ENCODE measurements at regions of chr10 and their contacts with region 1.

Region 1: GRCh38 chr10:118720685-118721538 is 33.9 kb downstream of the CACUL1 start:
- DNase-seq: peak; percentile 28
- ATAC-seq: no peak
- H3K4me3 ChIP-seq: no peak overlapping the region
- H3K27ac ChIP-seq: no peak overlapping the region
- H3K4me1 ChIP-seq: no peaks in the 10 kb centered on the region
- H3K27me3 ChIP-seq: no peaks in the 10 kb centered on the region
- CTCF ChIP-seq: peak; percentile 70
- EP300 ChIP-seq: no peak
- POLR2A ChIP-seq: no peak
- RAD21 ChIP-seq: no peak

Region 2: GRCh38 chr10:118635674-118636402 is 85.1 kb before region 1 on chr10:
- CTCF ChIA-PET with region 1: no interaction called
- POLR2A ChIA-PET with region 1: no interaction called
- in situ Hi-C with region 1: no loop called
- intact Hi-C with region 1: no loop called
- DNase-seq: no peak
- ATAC-seq: no peak
- H3K4me3 ChIP-seq: no peak overlapping the region
- H3K27ac ChIP-seq: no peak overlapping the region
- H3K4me1 ChIP-seq: no peaks in the 10 kb centered on the region
- H3K27me3 ChIP-seq: peaks cover 0 to 18% of the 10 kb centered on the region in 2 experiments; a peak in 2 of 5 replicates
- CTCF ChIP-seq: no peak
- EP300 ChIP-seq: no peak
- POLR2A ChIP-seq: no peak
- RAD21 ChIP-seq: no peak

Region 3: GRCh38 chr10:118667732-118668131 is 53.2 kb before region 1 on chr10:
- CTCF ChIA-PET with region 1: no interaction called
- POLR2A ChIA-PET with region 1: no interaction called
- in situ Hi-C with region 1: no loop called
- intact Hi-C with region 1: loop called (anchors 2 kb)
- DNase-seq: peak; percentile 44
- ATAC-seq: peak; percentile 21
- H3K4me3 ChIP-seq: no peak overlapping the region
- H3K27ac ChIP-seq: peak overlapping the region; percentile 26
- H3K4me1 ChIP-seq: peaks cover 23% of the 10 kb centered on the region
- H3K27me3 ChIP-seq: no peaks in the 10 kb centered on the region; a peak in 1 of 5 replicates
- CTCF ChIP-seq: no peak
- EP300 ChIP-seq: peak in 1 of 2 experiments; percentile 73; a peak in 2 of 4 replicates
- POLR2A ChIP-seq: no peak
- RAD21 ChIP-seq: no peak